Activated T-helper 1 cell treated with anti-CD3 and anti-CD28 coated beads, Interleukin-12 subunit alpha, Interleukin-12 subunit beta, Interleukin-2, Interleukin-4 antibody, amounts not matched to agents 30 ng/mL and 10 ng/mL and 1 ng/mL, durations not matched to agents 14 hours and 24 hours and 36 hours (primary cell): ENCODE measurements at regions of chr10 and their contacts with region 1.

Region 1: DNA sequence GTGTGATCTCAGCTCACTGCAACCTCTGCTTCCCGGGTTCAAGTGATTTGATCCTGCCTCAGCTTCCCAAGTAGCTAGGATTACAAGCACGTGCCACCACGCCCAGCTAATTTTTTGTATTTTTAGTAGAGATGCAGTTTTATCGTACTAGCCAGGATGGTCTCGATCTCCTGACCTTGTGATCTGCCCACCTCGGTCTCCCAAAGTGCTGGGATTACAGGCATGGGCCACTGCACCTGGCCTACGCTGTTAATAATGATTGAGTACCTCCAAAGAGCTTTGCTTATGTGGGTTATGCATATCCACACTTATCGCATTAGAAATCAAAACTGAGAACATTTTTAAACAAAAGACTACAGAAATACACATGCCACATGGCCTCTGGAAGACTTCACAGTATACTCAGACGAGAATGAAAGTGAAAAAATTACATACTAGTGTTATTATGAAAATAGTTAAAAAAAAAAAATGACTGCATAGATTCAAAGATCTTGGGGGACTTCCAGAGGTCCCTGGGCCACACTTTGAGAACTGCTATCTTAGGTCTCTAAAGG is 25.4 kb downstream of the RPP38 start:
- DNase-seq: no peak
- H3K4me3 Mint-ChIP-seq: no peak overlapping the region
- H3K27ac Mint-ChIP-seq: peak overlapping the region; percentile 72
- H3K4me1 Mint-ChIP-seq: peaks cover 27% of the 10 kb centered on the region
- H3K27me3 Mint-ChIP-seq: no peaks in the 10 kb centered on the region

Region 2: DNA sequence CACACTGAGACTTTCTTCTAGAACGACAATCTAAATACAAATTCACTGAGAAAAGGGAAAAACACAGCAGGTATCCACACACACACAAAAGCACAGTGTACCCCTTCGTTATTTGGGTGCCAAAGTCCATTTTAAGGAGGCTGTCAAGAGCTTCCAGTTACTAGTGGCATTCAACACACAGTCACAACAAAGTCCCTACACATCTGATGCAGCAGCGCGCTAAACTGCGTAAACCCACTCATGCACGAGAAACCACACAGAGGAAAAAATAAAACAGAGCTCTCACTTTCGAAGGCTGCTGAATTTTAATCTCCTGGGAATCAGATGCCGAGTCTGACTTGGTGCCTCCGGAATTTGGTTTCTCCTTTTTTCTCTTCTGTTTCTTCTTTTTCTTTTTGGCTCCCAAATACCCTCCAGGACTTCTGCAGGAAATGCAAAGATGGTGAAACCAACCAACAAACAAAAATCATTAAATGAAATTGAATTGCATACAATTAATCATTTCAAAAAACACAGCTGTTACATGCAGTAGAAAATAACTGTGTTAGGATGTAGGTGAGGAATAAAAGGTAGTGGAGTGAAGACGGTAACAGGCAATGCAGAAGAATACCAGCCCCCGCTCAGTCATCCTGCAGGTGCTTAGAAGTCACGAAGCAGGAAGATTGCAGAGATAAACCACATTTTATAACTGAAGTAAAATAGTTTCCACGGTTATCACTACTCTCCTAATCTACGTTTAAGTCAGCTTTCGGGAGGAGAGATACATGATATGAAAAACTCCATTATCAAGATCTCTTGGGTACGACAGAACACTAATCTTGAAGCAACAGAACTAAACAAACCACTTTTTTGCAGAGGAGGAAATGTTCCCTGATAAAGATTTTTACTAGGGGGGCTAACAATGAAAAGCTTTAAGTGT is 18.8 kb after region 1 on chr10:
- intact Hi-C with region 1: loop called (anchors 2 kb)
- DNase-seq: no peak
- H3K4me3 Mint-ChIP-seq: peak overlapping the region; percentile 29
- H3K27ac Mint-ChIP-seq: no peak overlapping the region
- H3K4me1 Mint-ChIP-seq: peaks cover 16% of the 10 kb centered on the region
- H3K27me3 Mint-ChIP-seq: no peaks in the 10 kb centered on the region

Region 3: GRCh38 chr10:15223174-15223573 is 100.6 kb after region 1 on chr10:
- intact Hi-C with region 1: no loop called
- DNase-seq: no peak
- H3K4me3 Mint-ChIP-seq: no peak overlapping the region
- H3K27ac Mint-ChIP-seq: no peak overlapping the region
- H3K4me1 Mint-ChIP-seq: no peaks in the 10 kb centered on the region
- H3K27me3 Mint-ChIP-seq: peaks cover 4% of the 10 kb centered on the region

Region 4: GRCh38 chr10:15245530-15245929 is 123.0 kb after region 1 on chr10:
- intact Hi-C with region 1: no loop called
- DNase-seq: no peak
- H3K4me3 Mint-ChIP-seq: no peak overlapping the region
- H3K27ac Mint-ChIP-seq: no peak overlapping the region
- H3K4me1 Mint-ChIP-seq: no peaks in the 10 kb centered on the region
- H3K27me3 Mint-ChIP-seq: no peaks in the 10 kb centered on the region